ENCODE measurements at regions of chr7 and their contacts with region 1.

Region 1: GRCh38 chr7:108181073-108181985 is 51.2 kb upstream of the LAMB4 start:
- DNase-seq: no peak

Region 2: DNA sequence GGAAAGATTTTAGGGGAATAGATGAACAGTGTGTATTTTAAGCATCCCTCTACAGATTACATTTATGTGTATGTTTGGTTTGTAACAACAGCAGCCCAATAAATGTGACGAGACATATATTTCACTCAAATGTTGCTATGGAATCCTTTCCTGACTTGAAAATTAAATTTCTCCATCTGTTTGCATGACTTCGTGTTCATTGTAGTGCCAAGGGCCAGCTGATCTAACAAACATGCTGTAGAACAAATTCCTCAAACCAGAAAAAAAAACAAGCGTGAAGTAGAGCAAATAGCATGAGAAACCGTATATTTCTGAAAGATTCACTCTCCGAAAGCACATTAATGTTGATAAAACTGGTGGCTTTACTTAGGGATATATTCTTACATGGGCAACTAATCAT is 187.1 kb after region 1 on chr7:
- intact Hi-C with region 1: no loop called
- DNase-seq: no peak

Region 3: DNA sequence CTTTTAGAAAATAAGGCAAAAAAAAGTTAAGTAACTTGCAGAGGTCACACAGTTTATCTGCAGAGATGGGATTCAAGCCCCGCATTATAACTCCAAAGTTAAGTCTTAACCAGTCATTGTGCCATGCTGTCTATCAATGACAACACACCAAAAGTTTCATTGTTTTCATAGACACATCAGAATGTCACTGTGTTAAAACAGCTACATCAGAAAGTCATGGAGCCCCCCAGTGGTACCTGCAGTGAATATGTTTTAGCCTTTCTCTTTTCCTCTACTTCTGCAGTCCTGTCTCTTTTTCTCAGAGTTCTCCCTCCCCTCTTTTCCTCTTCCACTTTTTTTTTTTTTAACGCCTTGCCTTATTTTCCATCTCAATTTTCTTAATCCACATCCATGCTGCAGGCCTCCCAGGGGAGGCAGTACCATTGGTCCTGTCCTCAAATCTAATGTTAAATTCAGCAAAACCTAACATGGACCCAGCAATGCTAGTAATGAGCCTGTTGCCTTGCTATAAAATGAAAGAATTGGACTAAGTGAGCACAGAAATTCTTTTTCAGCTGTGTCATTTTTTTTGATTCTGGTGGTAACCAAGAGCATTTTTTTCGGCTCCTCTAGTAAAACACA is 278.7 kb after region 1 on chr7:
- intact Hi-C with region 1: loop called (anchors 10 kb)
- DNase-seq: no peak

Region 4: GRCh38 chr7:108497082-108497725 is 315.9 kb after region 1 on chr7:
- intact Hi-C with region 1: loop called (anchors 5 kb)
- DNase-seq: no peak